ENCODE measurements at regions of chr2 and their contacts with region 1.

Region 1: GRCh38 chr2:27996156-27996922 is 105.8 kb downstream of the BABAM2 start:
- DNase-seq: no peak
- H3K4me3 ChIP-seq: no peak overlapping the region
- H3K4me3 Mint-ChIP-seq: no peak overlapping the region
- H3K27ac ChIP-seq: peak overlapping the region in 1 of 2 donors; percentile 58
- H3K27ac Mint-ChIP-seq: peak overlapping the region in 5 of 7 donors; percentile 12 to 75 (median 42)
- H3K4me1 ChIP-seq: peaks cover 41 to 53% of the 10 kb centered on the region in 2 donors
- H3K4me1 Mint-ChIP-seq: peaks cover 53% of the 10 kb centered on the region
- H3K27me3 ChIP-seq: no peaks in the 10 kb centered on the region
- H3K27me3 Mint-ChIP-seq: peaks cover 0 to 1% (median 0%) of the 10 kb centered on the region in 3 donors
- CTCF ChIP-seq: no peak

Region 2: GRCh38 chr2:27960237-27960912 is 36.0 kb before region 1 on chr2:
- intact Hi-C with region 1: loop called in 1 of 2 experiments (anchors 5 kb)
- DNase-seq: no peak
- H3K4me3 ChIP-seq: peak overlapping the region in 1 of 3 experiments; percentile 45
- H3K4me3 Mint-ChIP-seq: peak overlapping the region in 1 of 2 donors; percentile 15
- H3K27ac ChIP-seq: peak overlapping the region; percentile 47 to 78
- H3K27ac Mint-ChIP-seq: peak overlapping the region; percentile 83 to 92 (median 90)
- H3K4me1 ChIP-seq: peaks cover 50 to 61% of the 10 kb centered on the region in 2 donors
- H3K4me1 Mint-ChIP-seq: peaks cover 61% of the 10 kb centered on the region
- H3K27me3 ChIP-seq: no peaks in the 10 kb centered on the region
- H3K27me3 Mint-ChIP-seq: peaks cover 0 to 2% (median 0%) of the 10 kb centered on the region in 3 donors
- CTCF ChIP-seq: no peak